ENCODE measurements at regions of chr3 and their contacts with region 1.

Region 1: DNA sequence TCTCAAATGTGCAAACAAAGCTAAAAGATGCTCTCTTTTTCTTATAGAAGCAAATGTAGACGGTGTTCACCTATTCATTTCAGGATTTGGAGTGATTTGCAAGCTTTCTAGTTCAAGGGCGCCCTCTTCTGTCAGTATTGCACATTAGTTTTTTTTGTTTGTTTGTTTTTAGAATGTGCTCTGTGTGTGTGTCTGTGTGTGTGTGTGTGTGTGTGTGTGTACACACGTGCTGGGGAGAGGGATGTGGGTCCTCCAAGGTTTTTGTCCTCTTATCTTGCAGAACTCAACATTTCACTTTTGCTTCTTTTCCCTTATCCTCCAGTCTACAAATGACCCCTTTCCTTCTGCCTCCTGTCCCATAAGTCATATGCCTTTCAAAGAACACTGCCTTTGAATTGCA is 23.5 kb downstream of the DNAH1 start:
- DNase-seq: peak; percentile 61
- ATAC-seq: peak; percentile 76
- H3K4me3 Mint-ChIP-seq: no peak overlapping the region
- H3K27ac Mint-ChIP-seq: no peak overlapping the region
- H3K4me1 Mint-ChIP-seq: peaks cover 6% of the 10 kb centered on the region
- H3K27me3 Mint-ChIP-seq: no peaks in the 10 kb centered on the region

Region 2: DNA sequence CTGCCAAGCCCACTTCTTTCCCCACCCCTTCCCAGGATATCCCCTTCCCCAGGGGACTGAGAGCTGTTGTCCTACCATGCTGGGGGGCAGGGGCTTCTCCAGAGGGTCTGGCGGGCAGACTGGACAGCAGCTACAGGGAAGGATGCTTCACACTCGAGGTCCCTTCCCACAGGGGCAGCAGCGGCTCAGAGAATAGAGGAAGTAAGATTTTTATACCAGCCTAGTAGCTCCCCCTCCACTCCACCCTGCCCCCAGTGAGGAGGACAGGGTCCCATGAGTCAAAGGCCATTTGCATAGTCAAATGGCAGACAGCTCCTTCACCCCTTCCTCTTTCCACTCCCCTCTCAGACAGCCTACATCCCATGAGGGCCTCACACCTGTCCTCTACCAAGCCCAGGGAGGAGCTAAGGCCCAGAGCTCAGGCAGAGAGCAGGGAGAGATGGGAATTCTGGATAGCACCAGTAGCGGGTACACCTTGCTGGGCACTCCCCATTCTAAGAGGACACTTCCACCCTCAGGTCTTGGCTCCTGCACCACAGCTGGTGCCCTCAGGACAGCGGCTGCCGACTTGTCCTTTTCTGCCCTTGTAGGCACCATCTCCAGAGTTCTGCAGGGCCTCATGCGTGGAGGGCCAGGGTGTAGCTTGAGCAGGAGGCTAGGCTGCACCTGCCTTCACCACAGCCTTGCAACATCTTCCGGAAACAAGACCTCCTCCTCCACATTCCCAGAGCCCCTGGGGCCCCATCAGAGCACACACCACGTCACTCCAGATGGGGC is 114.0 kb before region 1 on chr3 and contains the start of gene TLR9:
- CTCF ChIA-PET with region 1: interaction called, 144 read pairs
- DNase-seq: no peak
- ATAC-seq: peak; percentile 7
- H3K4me3 Mint-ChIP-seq: no peak within 1 kb of the TSS
- H3K27ac Mint-ChIP-seq: peak within 1 kb of the TSS; percentile 62
- H3K4me1 Mint-ChIP-seq: peaks cover 59% of the 10 kb centered on the region
- H3K27me3 Mint-ChIP-seq: no peaks in the 10 kb centered on the region
- total RNA-seq, gene TLR9: 0.64 TPM in 1 of 2 experiments, not detected in the other

Region 3: DNA sequence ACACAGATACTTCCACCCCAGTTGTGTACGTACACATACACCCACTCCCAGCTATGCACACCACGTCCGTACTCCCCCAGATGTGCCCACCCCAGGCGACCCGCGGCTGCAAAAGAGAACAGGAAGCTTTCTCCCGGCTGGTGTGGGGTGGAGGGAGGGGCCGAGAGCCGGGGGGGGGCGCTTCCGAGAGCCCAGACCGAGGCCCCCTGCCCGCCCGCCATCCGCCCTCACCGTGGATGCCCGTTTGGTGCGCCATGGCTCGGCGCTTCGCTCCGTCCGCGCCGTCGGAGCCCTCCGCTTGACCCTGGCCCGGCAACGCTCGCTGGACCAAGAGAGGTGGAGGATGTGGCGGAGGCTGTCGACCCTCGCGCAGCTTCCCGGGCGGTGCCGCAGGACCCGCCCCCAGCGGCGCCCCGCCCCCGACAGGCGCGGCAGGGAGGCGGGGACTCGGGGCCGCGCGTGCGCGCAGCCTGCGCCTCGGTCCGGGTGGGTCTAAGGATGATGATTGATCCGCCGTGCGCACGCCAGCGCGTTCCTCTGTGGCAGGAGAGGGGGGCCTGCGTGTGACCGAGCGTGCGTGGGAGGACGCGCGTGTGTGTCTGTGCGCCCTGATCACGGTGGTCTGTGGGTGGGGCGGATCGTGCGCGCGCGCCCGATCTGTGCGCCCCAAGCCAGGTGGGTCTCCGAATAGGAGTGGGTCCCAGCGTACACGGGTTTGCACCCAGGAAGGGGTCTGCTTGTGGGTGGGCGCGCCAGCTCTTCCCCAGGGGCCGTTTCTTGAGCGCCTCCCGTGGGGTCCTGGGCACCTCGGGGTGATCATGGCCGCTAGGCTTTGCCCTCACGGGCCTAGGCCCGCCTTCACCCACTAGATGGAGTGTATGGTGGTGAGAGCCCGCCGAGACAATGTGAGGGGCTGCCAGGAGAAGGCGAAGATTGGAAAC is 100.6 kb before region 1 on chr3 and contains the start of gene TWF2:
- CTCF ChIA-PET with region 1: interaction called, 89 read pairs
- DNase-seq: peak; percentile 87
- ATAC-seq: peak; percentile 86
- H3K4me3 Mint-ChIP-seq: peak within 1 kb of the TSS; percentile 96
- H3K27ac Mint-ChIP-seq: peak within 1 kb of the TSS; percentile 95
- H3K4me1 Mint-ChIP-seq: peaks cover 68% of the 10 kb centered on the region
- H3K27me3 Mint-ChIP-seq: no peaks in the 10 kb centered on the region
- total RNA-seq, gene TWF2: 110 to 131 TPM

Region 4: GRCh38 chr3:52278510-52279069 is 61.0 kb before region 1 on chr3 and contains the start of gene WDR82:
- CTCF ChIA-PET with region 1: interaction called, 11 read pairs
- DNase-seq: peak; percentile 98
- ATAC-seq: peak; percentile 76
- H3K4me3 Mint-ChIP-seq: peak within 1 kb of the TSS; percentile 99
- H3K27ac Mint-ChIP-seq: peak within 1 kb of the TSS; percentile 98
- H3K4me1 Mint-ChIP-seq: peaks cover 61% of the 10 kb centered on the region
- H3K27me3 Mint-ChIP-seq: no peaks in the 10 kb centered on the region
- total RNA-seq, gene WDR82: 114 to 132 TPM

Region 5: DNA sequence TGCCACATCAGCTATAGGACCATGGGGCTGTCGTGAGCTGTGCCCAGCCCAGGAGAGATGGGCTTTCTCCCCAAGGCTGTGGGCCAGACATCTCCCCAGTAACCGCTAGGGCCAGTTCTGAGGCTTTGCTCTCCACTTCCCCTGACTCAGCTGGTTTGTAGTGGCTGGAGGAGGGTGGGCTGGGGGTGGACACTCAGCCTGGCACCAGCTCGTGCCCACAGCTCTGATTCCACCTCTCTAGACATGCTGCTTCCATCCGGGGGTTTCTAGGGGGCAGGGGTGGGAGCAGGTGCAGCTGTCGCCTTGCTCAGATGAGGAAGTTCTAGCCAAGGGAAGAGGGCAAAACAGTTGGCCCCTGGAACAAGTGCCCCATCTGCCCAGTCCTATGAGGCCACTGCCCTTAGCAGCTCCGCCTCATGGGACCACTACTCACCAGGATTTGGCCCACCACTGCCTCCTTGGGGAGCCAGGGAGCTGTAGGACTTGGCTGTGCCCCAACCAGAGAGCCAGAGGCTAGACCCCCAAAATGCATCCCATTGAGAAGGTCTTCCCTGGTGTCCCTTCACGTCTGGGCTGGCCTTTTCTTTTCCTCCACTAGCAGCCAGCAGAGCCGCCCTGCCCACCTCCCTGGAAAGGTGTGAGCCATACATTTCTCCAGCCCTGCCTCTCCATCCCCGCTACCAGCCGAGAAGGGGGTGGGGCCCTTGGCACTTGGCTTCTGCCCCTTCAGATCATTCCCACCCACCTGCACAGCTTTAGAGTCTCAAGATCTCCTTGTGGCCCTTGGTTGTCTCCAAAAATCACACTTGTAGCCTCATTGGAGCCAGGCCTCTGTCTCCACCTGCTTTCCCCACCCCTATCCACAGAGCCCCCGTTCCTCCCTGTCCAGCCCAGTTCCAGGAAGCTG is 42.1 kb before region 1 on chr3:
- CTCF ChIA-PET with region 1: interaction called, 64 read pairs
- DNase-seq: no peak
- ATAC-seq: no peak
- H3K4me3 Mint-ChIP-seq: no peak overlapping the region
- H3K27ac Mint-ChIP-seq: no peak overlapping the region
- H3K4me1 Mint-ChIP-seq: no peaks in the 10 kb centered on the region
- H3K27me3 Mint-ChIP-seq: no peaks in the 10 kb centered on the region

Measured in activated CD8-positive, alpha-beta memory T cell treated with anti-CD3 and anti-CD28 coated beads, Interleukin-2, amount 10 ng/mL, durations not matched to agents 7 days and 5 days (primary cell).